A673 (cell line): ENCODE measurements at regions of chr9 and their contacts with region 1.

Region 1: DNA sequence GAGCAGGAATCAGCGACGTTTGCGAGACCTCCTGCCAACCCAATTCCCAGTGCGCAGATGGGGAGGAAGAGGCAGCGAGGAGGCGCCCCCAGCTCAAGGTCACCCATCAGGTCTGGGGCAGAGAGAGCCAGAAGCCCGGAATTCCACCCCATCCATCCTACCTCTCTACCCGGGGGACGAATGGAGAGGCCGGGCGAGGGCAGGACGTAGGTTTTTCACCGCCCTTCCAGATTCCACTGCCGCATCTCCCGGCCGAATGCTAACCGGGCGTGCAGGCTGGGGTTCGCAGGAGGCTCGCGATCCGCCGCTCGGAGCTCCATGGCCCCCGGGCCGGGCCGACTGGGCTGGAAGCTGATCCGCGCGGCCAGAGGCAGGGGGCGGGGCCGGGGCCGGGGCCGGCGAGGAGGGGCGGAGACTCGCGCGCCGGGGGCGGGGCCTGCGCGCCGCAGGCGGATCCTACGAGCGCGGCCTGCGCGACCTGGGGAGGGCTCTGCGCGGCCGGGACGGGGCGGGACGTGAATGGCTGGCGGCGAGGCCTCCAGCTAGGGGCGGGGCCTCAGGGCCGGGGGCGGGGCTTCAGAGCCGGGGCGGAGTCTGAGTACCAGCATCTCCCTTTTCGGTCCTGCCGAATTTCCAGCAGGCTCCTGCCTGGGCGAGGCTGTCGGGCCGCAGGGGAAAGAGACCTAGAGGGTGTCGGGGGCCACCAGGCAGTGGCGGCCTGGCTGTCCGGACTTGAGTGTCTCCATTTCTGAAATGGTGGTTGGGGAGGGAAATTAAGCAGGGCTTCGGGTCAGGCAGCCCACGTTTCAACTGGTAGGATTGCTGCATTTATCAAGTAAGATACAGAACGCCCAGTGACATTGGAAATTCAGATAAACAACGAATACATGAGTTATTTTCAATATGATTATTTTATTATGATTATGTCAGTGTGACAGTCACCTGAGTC is at the start of gene ST6GALNAC4:
- DNase-seq: peak; percentile 93
- H3K4me3 ChIP-seq: peak within 1 kb of the TSS; percentile 74
- H3K27ac ChIP-seq: no peak within 1 kb of the TSS
- H3K4me1 ChIP-seq: peaks cover 20% of the 10 kb centered on the region
- H3K27me3 ChIP-seq: no peaks in the 10 kb centered on the region
- CTCF ChIP-seq: no peak
- total RNA-seq, gene ST6GALNAC4: 11.8 and 15.8 TPM in 2 replicates

Region 2: GRCh38 chr9:127214421-127215267 is 702.3 kb before region 1 on chr9:
- CTCF ChIA-PET with region 1: no interaction called
- POLR2A ChIA-PET with region 1: no interaction called
- intact Hi-C with region 1: loop called (anchors 5 kb)
- DNase-seq: peak; percentile 45
- H3K4me3 ChIP-seq: no peak overlapping the region
- H3K27ac ChIP-seq: no peak overlapping the region
- H3K4me1 ChIP-seq: peaks cover 10% of the 10 kb centered on the region
- H3K27me3 ChIP-seq: no peaks in the 10 kb centered on the region
- CTCF ChIP-seq: peak; percentile 84

Region 3: DNA sequence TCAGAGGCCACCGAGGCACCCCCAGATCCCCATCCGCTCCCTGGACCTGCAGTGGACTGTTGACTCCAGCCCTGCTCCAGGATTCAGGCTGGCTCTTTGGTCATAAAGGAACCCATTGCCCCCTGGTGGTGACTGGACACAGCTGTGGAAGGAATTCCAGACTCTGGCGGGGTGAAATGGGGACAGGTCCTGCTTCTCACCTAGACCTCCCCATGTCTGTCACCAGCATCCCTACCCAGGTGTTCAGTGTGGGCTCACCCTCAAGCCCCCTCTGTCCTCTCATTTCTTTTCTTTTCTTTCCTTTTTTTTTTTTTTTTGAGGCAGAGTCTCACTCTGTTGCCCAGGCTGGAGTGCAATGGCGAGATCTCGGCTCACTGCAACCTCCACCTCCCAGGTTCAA is 330.4 kb before region 1 on chr9:
- CTCF ChIA-PET with region 1: no interaction called
- POLR2A ChIA-PET with region 1: no interaction called
- intact Hi-C with region 1: loop called (anchors 2 kb)
- DNase-seq: peak; percentile 76
- H3K4me3 ChIP-seq: no peak overlapping the region
- H3K27ac ChIP-seq: no peak overlapping the region
- H3K4me1 ChIP-seq: no peaks in the 10 kb centered on the region
- H3K27me3 ChIP-seq: no peaks in the 10 kb centered on the region
- CTCF ChIP-seq: peak; percentile 84

Region 4: DNA sequence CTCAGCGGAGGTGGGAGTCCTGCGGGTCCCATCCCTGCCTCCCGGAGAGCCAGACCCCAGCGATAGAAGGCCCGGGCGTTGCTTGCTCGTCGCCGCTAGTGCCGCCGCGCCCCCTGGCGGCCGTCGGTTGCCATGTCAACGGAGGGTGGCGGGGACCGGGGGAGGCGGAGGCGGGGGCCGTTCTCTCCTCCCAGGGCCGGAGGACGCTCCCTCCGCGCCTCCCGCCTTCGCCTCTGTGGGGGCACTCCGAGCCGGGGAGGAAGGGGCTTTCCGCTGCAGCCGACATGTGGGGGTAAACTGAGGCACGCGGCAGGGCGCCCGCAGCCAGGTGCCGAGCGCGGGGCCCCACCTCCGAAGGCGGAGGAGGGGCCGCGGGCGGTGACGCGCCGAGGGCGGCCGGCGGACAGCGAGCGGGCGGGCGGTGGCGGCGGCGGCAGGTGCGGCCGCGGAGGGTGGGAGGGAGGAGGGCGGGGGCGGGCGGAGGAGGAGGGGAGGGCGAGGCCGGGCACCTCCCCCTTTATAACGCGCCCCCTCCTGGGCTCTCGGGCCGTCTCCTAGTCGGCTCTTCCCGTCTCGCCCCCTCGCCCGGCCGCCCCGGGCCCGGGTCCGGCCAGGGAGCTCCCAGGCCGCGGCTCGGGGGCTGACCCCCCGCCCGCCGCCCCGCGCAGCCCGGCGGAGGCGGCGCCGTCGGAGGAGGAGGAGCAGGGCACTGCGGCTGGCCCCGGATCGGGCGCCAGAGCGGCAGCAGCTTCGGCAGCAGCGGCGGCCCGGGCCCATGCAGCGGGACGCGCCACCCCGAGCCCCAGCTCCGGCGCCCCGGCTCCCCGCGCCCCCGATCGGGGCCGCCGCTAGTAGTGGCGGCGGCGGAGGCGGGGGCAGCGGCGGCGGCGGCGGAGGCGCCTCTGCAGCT is 131.7 kb before region 1 on chr9:
- CTCF ChIA-PET with region 1: no interaction called
- POLR2A ChIA-PET with region 1: no interaction called
- intact Hi-C with region 1: loop called (anchors 1 kb)
- DNase-seq: peak; percentile 90
- H3K4me3 ChIP-seq: peak overlapping the region; percentile 77
- H3K27ac ChIP-seq: peak overlapping the region; percentile 93
- H3K4me1 ChIP-seq: peaks cover 6% of the 10 kb centered on the region
- H3K27me3 ChIP-seq: no peaks in the 10 kb centered on the region
- CTCF ChIP-seq: peak; percentile 94